Activated B cell treated with CpG ODN at 0.5 μM for 24 hours (primary cell): ENCODE measurements at regions of chr17 and their contacts with region 1.

Region 1: GRCh38 chr17:48908047-48908843 is at the start of gene UBE2Z:
- DNase-seq: peak; percentile 83
- ATAC-seq: peak; percentile 84
- H3K4me3 Mint-ChIP-seq: peak within 1 kb of the TSS; percentile 96
- H3K27ac Mint-ChIP-seq: peak within 1 kb of the TSS; percentile 99
- H3K4me1 Mint-ChIP-seq: peaks cover 51% of the 10 kb centered on the region
- H3K27me3 Mint-ChIP-seq: no peaks in the 10 kb centered on the region
- CTCF ChIP-seq: no peak
- total RNA-seq, gene UBE2Z: 121 and 154 TPM in 2 replicates

Region 2: GRCh38 chr17:48841395-48841831 is 66.8 kb before region 1 on chr17:
- CTCF ChIA-PET with region 1: no interaction called
- POLR2A ChIA-PET with region 1: interaction called, 10 read pairs
- intact Hi-C with region 1: no loop called
- DNase-seq: no peak
- ATAC-seq: peak; percentile 97
- H3K4me3 Mint-ChIP-seq: peak overlapping the region; percentile 82
- H3K27ac Mint-ChIP-seq: peak overlapping the region; percentile 93
- H3K4me1 Mint-ChIP-seq: peaks cover 57% of the 10 kb centered on the region
- H3K27me3 Mint-ChIP-seq: no peaks in the 10 kb centered on the region
- CTCF ChIP-seq: no peak

Region 3: DNA sequence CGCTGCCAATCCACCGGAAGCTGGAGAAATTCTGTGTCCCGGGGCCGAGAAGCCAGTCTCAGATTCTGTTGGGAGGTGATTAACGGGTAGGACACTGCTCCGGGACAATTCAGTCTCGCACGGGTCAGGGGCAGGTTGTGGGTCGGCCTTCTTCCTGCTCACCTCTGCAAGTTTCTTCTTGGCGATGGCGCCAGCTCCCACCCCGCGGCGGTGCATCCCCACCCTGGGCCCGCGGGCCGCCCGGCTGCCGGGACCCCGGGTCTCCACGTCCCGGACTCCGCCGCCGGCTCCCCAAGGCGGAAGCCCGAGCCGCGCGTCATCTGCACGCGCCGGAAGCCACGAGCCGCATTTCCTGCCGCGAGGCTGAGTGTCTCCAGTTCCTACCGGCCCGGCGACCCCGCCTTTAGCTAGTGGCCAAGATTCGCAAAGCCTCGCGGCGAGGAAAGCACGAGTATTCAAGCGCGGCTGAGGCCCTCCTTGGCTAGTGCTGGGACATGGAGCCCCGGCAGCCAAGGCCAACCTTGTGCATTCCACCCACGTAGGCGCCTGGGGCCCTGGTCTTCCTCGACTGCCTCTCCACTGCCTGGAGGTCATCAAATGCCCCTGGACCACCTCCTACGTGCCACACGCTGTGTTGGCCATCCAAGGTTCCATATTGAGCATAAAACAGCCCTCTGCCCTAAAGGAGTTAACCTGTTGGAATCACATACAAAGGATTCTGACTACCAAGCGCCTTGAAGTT is 36.4 kb after region 1 on chr17 and contains the start of gene SNF8:
- CTCF ChIA-PET with region 1: no interaction called
- POLR2A ChIA-PET with region 1: interaction called, 48 read pairs
- intact Hi-C with region 1: loop called (anchors 2 kb)
- DNase-seq: peak; percentile 96
- ATAC-seq: peak; percentile 94
- H3K4me3 Mint-ChIP-seq: peak within 1 kb of the TSS; percentile 96
- H3K27ac Mint-ChIP-seq: peak within 1 kb of the TSS; percentile 90
- H3K4me1 Mint-ChIP-seq: peaks cover 16% of the 10 kb centered on the region
- H3K27me3 Mint-ChIP-seq: no peaks in the 10 kb centered on the region
- CTCF ChIP-seq: no peak
- total RNA-seq, gene SNF8: 129 and 130 TPM in 2 replicates

Region 4: GRCh38 chr17:48952904-48953303 is 44.7 kb after region 1 on chr17:
- CTCF ChIA-PET with region 1: no interaction called
- POLR2A ChIA-PET with region 1: interaction called, 9 read pairs
- intact Hi-C with region 1: loop called (anchors 1 kb)
- DNase-seq: no peak
- ATAC-seq: peak; percentile 94
- H3K4me3 Mint-ChIP-seq: peak overlapping the region; percentile 73
- H3K27ac Mint-ChIP-seq: peak overlapping the region; percentile 87
- H3K4me1 Mint-ChIP-seq: peaks cover 6% of the 10 kb centered on the region
- H3K27me3 Mint-ChIP-seq: no peaks in the 10 kb centered on the region
- CTCF ChIP-seq: no peak

Region 5: GRCh38 chr17:49180303-49180702 is 272.1 kb after region 1 on chr17:
- CTCF ChIA-PET with region 1: no interaction called
- POLR2A ChIA-PET with region 1: no interaction called
- intact Hi-C with region 1: no loop called
- DNase-seq: peak; percentile 58
- ATAC-seq: peak; percentile 52
- H3K4me3 Mint-ChIP-seq: no peak overlapping the region
- H3K27ac Mint-ChIP-seq: no peak overlapping the region
- H3K4me1 Mint-ChIP-seq: peaks cover 4% of the 10 kb centered on the region
- H3K27me3 Mint-ChIP-seq: peaks cover 1% of the 10 kb centered on the region
- CTCF ChIP-seq: peak; percentile 54